ENCODE measurements at regions of chr3 and their contacts with region 1.

Region 1: DNA sequence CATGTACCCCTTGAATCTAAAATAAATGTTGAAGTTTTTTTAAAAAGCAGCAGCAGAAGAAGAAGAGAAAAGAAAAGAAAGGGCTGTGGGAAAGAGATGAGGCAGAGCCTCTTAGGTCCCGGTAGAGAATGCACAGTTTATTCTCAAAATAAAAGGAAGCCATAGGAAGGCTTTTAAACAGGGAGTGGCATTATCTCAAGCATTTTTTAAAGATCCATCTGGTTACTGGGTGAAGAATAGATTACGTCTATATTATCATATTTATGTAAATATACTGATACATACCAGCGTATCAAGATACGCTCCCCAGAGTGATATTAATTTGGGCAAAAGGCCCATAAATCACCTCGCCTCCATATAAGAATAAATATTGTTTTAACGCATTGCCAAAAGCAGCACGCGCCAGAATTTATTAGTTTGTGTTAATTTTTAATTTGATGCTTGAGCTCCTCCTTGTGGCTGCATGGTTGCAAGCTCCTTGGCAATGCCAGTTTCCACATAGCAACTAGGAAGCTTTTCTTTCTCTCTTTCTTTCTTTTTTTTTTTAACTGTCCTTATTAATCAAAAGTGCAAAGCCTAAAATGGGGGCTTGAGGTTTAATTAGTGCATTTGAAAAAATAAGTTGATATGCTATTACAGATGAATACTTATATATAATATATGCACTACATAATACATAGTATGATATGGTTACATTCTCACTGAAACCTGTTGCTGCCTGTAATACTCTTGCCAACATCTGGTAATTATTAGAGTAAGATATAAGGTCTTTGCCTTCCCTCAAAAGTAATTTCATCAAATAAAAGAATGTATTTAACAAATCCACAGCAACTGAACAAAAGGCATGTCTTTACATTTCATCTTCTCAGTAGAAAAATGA is 242.8 kb upstream of the UBE2E2 start:
- DNase-seq: peak in 1 of 2 donors; percentile 37
- ATAC-seq: peak in 3 of 8 donors; percentile 38 to 62 (median 47)
- H3K4me3 ChIP-seq: no peak overlapping the region
- H3K27ac ChIP-seq: no peak overlapping the region
- H3K4me1 ChIP-seq: peaks cover 0 to 7% (median 0%) of the 10 kb centered on the region in 9 donors
- H3K27me3 ChIP-seq: no peaks in the 10 kb centered on the region
- CTCF ChIP-seq: peak; percentile 41 to 84 (median 73)

Region 2: DNA sequence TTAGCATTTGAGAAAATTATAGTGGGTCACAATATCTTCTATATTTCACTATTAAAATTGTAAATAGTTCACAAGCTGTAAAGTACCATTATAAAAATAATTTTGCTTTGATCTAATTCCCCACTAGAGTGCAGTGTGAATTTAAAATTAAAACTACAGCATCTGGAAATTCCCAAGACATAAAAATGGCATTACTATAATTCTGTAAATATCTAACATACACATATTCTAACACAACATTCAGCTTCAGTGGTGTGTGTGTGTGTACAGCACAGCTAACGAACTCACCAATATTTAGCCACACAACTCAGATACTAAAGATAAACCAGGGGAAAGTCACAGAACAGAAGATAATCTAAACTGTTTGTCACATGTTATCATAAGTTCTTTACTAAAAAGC is 784.4 kb before region 1 on chr3:
- intact Hi-C with region 1: loop called in 3 of 10 experiments (anchors 5 to 10 kb)
- DNase-seq: no peak
- ATAC-seq: no peak
- H3K4me3 ChIP-seq: no peak overlapping the region
- H3K27ac ChIP-seq: no peak overlapping the region
- H3K4me1 ChIP-seq: no peaks in the 10 kb centered on the region
- H3K27me3 ChIP-seq: no peaks in the 10 kb centered on the region
- CTCF ChIP-seq: peak in 4 of 9 donors; percentile 28 to 37 (median 34)

Region 3: GRCh38 chr3:22555753-22556435 is 404.5 kb before region 1 on chr3:
- intact Hi-C with region 1: loop called in 7 of 10 experiments (anchors 5 to 10 kb)
- DNase-seq: no peak
- ATAC-seq: no peak
- H3K4me3 ChIP-seq: no peak overlapping the region
- H3K27ac ChIP-seq: no peak overlapping the region
- H3K4me1 ChIP-seq: no peaks in the 10 kb centered on the region
- H3K27me3 ChIP-seq: no peaks in the 10 kb centered on the region
- CTCF ChIP-seq: no peak

Region 4: GRCh38 chr3:22565393-22565792 is 395.0 kb before region 1 on chr3:
- intact Hi-C with region 1: loop called in 8 of 10 experiments (anchors 2 to 10 kb)
- DNase-seq: no peak
- ATAC-seq: no peak
- H3K4me3 ChIP-seq: no peak overlapping the region
- H3K27ac ChIP-seq: no peak overlapping the region
- H3K4me1 ChIP-seq: no peaks in the 10 kb centered on the region
- H3K27me3 ChIP-seq: no peaks in the 10 kb centered on the region
- CTCF ChIP-seq: no peak

Region 5: DNA sequence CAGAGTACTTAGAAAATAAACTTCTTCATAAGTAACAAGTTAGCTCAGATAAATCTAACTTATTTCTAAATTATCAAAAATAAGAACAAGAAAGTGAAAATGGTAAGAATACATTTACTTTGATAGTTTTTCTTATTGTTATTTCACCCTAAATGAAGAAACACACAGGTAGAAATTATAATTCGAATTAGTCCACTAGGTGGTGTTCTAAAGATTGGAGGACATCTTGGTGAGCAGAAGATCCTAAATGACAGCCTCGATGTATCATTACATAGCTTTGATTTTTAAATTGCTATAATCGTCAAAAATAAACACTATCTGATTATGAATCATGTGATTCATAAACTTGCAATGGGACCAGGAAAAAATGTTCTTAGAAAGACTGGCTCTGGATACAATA is 38.0 kb before region 1 on chr3:
- intact Hi-C with region 1: loop called in 1 of 10 experiments (anchors 5 kb)
- DNase-seq: no peak
- ATAC-seq: no peak
- H3K4me3 ChIP-seq: no peak overlapping the region
- H3K27ac ChIP-seq: no peak overlapping the region
- H3K4me1 ChIP-seq: no peaks in the 10 kb centered on the region
- H3K27me3 ChIP-seq: no peaks in the 10 kb centered on the region
- CTCF ChIP-seq: peak in 6 of 9 donors; percentile 33 to 47 (median 41)